PC-3 (cell line): ENCODE measurements at regions of chr15 and their contacts with region 1.

Region 1: GRCh38 chr15:42650208-42651066 is 75.0 kb downstream of the STARD9 start:
- DNase-seq: peak; percentile 98
- ATAC-seq: peak; percentile 100
- H3K4me3 ChIP-seq: no peak overlapping the region
- H3K27ac ChIP-seq: no peak overlapping the region
- H3K4me1 ChIP-seq: peaks cover 4% of the 10 kb centered on the region
- H3K27me3 ChIP-seq: no peaks in the 10 kb centered on the region
- CTCF ChIP-seq: peak; percentile 96

Region 2: GRCh38 chr15:42332331-42332730 is 318.1 kb before region 1 on chr15:
- CTCF ChIA-PET with region 1: no interaction called
- POLR2A ChIA-PET with region 1: no interaction called
- intact Hi-C with region 1: no loop called
- DNase-seq: no peak
- ATAC-seq: no peak
- H3K4me3 ChIP-seq: no peak overlapping the region
- H3K27ac ChIP-seq: no peak overlapping the region
- H3K4me1 ChIP-seq: no peaks in the 10 kb centered on the region
- H3K27me3 ChIP-seq: no peaks in the 10 kb centered on the region
- CTCF ChIP-seq: no peak

Region 3: GRCh38 chr15:42474827-42475226 is 175.6 kb before region 1 on chr15:
- CTCF ChIA-PET with region 1: no interaction called
- POLR2A ChIA-PET with region 1: no interaction called
- intact Hi-C with region 1: loop called (anchors 5 kb)
- DNase-seq: no peak
- ATAC-seq: no peak
- H3K4me3 ChIP-seq: no peak overlapping the region
- H3K27ac ChIP-seq: no peak overlapping the region
- H3K4me1 ChIP-seq: no peaks in the 10 kb centered on the region
- H3K27me3 ChIP-seq: no peaks in the 10 kb centered on the region
- CTCF ChIP-seq: no peak

Region 4: GRCh38 chr15:42581272-42581730 is 69.1 kb before region 1 on chr15:
- CTCF ChIA-PET with region 1: no interaction called
- POLR2A ChIA-PET with region 1: no interaction called
- intact Hi-C with region 1: loop called (anchors 2 kb)
- DNase-seq: peak; percentile 76
- ATAC-seq: peak; percentile 98
- H3K4me3 ChIP-seq: peak overlapping the region; percentile 56
- H3K27ac ChIP-seq: no peak overlapping the region
- H3K4me1 ChIP-seq: peaks cover 11% of the 10 kb centered on the region
- H3K27me3 ChIP-seq: no peaks in the 10 kb centered on the region
- CTCF ChIP-seq: no peak